H1 (cell line): ENCODE measurements at regions of chr17 and their contacts with region 1.

Region 1: GRCh38 chr17:61412143-61412859 is 12.7 kb downstream of the TBX2 start:
- DNase-seq: peak in 1 of 2 experiments; percentile 89
- H3K4me3 ChIP-seq: peak overlapping the region; percentile 50 to 65 (median 58)
- H3K27ac ChIP-seq: no peak overlapping the region
- H3K4me1 ChIP-seq: peaks cover 0 to 23% (median 11%) of the 10 kb centered on the region in 4 experiments; a peak in 5 of 7 replicates
- H3K27me3 ChIP-seq: peaks cover 43 to 95% (median 87%) of the 10 kb centered on the region in 4 experiments
- CTCF ChIP-seq: peak; percentile 84 to 95 (median 87)
- EP300 ChIP-seq: no peak
- POLR2A ChIP-seq: 0 out of 3 replicates have a peak, but pooled peaks of 1 of the 2 experiments have one; percentile 23
- RAD21 ChIP-seq: peak; percentile 95 to 98

Region 2: GRCh38 chr17:61335845-61336655 is 76.3 kb before region 1 on chr17:
- CTCF ChIA-PET with region 1: no interaction called
- POLR2A ChIA-PET with region 1: no interaction called
- DNase-seq: no peak
- H3K4me3 ChIP-seq: no peak overlapping the region
- H3K27ac ChIP-seq: no peak overlapping the region
- H3K4me1 ChIP-seq: 0 out of 7 replicates have a peak, but pooled peaks cover 0 to 2% (median 0%) of the 10 kb centered on the region in 4 experiments
- H3K27me3 ChIP-seq: no peaks in the 10 kb centered on the region
- CTCF ChIP-seq: no peak
- EP300 ChIP-seq: no peak
- POLR2A ChIP-seq: no peak
- RAD21 ChIP-seq: no peak

Region 3: GRCh38 chr17:61379457-61380216 is 32.7 kb before region 1 on chr17:
- CTCF ChIA-PET with region 1: no interaction called
- POLR2A ChIA-PET with region 1: no interaction called
- DNase-seq: no peak
- H3K4me3 ChIP-seq: no peak overlapping the region
- H3K27ac ChIP-seq: no peak overlapping the region
- H3K4me1 ChIP-seq: peaks cover 0 to 2% (median 0%) of the 10 kb centered on the region in 4 experiments; a peak in 2 of 7 replicates
- H3K27me3 ChIP-seq: no peaks in the 10 kb centered on the region
- CTCF ChIP-seq: no peak
- EP300 ChIP-seq: no peak
- POLR2A ChIP-seq: no peak
- RAD21 ChIP-seq: no peak

Region 4: DNA sequence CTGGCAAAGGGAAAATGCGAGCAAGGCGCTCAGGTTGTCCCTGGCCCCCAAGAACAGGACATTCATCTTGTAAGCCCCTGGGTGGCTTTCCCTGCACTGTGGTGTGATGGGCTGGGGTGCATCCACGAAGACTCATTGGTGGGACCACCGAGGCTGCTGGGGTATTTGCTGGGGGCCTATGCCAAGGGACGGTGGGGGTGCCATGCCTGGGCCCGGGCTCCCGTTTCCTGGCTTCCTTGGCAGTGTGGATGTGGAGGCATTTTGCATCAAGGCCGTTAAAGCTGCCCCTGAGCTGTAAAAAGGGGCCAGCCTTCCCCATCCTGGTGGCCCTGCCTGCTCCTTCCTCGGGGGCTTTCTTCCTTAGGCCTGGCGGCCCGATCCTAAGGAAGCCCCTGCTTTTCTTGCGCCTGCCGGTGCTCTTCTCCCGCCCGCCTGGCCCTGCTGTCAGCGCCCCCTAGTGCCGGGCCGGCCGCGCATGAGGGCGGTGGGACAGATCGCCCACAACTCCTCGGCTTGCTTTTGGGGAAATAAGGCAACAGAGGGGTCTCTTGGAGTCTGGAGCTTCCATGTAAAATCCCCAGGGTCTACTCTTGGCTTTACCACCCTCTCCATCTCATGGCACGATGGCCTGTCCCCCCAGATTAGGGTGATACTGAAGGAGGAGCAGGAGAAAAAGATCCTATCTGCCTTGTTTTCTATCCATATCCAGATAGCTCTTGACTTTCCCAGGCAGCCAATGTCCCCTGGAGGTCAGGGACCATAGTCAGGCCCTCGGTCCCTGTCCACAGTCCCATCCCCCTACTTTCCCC is 22.4 kb before region 1 on chr17:
- CTCF ChIA-PET with region 1: interaction called, 31 read pairs
- POLR2A ChIA-PET with region 1: no interaction called
- DNase-seq: peak in 1 of 2 experiments; percentile 92
- H3K4me3 ChIP-seq: no peak overlapping the region
- H3K27ac ChIP-seq: no peak overlapping the region
- H3K4me1 ChIP-seq: peaks cover 0 to 3% (median 1%) of the 10 kb centered on the region in 4 experiments; a peak in 3 of 7 replicates
- H3K27me3 ChIP-seq: peaks cover 10 to 24% (median 21%) of the 10 kb centered on the region in 4 experiments
- CTCF ChIP-seq: peak; percentile 90 to 93 (median 92)
- EP300 ChIP-seq: no peak
- POLR2A ChIP-seq: no peak
- RAD21 ChIP-seq: peak; percentile 87 to 92

Region 5: DNA sequence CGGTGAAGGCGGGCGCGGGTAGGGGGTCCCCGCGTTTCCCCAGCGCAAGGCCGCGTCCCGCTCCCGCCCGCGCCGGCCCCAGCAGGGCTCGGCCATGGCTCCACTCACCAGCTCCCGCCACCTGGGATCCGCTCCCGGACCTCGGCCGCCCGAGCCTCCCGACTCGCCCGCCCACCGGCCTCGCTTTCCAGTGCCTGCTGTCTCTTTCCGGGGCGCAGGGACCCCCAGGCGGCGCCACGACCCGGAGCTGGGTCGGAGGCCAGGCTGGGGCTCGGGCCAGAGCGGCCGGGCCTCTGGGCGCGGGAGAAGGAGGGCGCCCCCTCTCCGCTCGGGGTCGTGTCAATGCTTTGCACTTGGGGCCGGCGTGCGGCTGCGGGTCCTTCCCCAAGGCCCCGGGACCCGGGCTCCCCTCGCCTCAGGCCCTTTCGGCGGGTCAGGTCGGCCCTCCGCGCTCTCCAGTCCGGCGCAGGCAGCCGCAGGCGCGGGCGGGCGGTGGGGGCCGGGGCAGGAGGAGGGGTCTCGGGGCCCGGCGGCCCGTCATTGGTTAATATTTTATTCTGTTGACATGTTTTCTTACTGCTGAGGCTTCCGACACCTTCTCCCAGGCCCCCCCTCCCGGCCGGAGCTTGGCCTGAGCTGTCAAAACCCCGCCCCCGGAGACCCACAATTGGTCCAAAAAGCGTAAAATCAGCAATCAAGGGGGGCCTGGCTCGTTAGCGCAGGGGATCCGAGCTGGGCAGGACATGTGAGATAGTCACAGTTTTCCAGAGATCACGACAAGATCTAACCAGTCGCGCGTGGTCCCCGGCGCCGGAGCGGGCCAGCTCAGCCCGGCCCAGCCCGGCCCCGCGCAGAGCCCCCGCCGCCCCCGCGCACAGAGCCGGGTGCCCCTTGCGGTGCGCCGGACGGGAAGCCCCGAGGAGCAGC is 12.9 kb before region 1 on chr17 and contains the start of gene TBX2:
- CTCF ChIA-PET with region 1: interaction called, 31 read pairs
- POLR2A ChIA-PET with region 1: interaction called, 8 read pairs
- DNase-seq: peak in 1 of 2 experiments; percentile 80
- H3K4me3 ChIP-seq: peak within 1 kb of the TSS in 2 of 4 experiments; percentile 6 to 53; a peak in 5 of 8 replicates
- H3K27ac ChIP-seq: no peak within 1 kb of the TSS
- H3K4me1 ChIP-seq: peaks cover 0 to 40% (median 24%) of the 10 kb centered on the region in 4 experiments; a peak in 6 of 7 replicates
- H3K27me3 ChIP-seq: peaks cover 99 to 100% (median 100%) of the 10 kb centered on the region in 4 experiments
- CTCF ChIP-seq: peak in 1 of 3 experiments; percentile 7; a peak in 1 of 4 replicates
- EP300 ChIP-seq: no peak
- POLR2A ChIP-seq: no peak
- RAD21 ChIP-seq: 0 out of 4 replicates have a peak, but pooled peaks of 1 of the 2 experiments have one; percentile 0
- total RNA-seq, gene TBX2: not detected in 2 replicates

Region 6: GRCh38 chr17:61426013-61426730 is 13.9 kb after region 1 on chr17:
- CTCF ChIA-PET with region 1: interaction called, 11 read pairs
- POLR2A ChIA-PET with region 1: no interaction called
- DNase-seq: peak in 1 of 2 experiments; percentile 67
- H3K4me3 ChIP-seq: no peak overlapping the region
- H3K27ac ChIP-seq: no peak overlapping the region
- H3K4me1 ChIP-seq: peaks cover 0 to 4% (median 2%) of the 10 kb centered on the region in 4 experiments; a peak in 3 of 7 replicates
- H3K27me3 ChIP-seq: no peaks in the 10 kb centered on the region; a peak in 1 of 7 replicates
- CTCF ChIP-seq: peak; percentile 49 to 73 (median 69)
- EP300 ChIP-seq: no peak
- POLR2A ChIP-seq: no peak
- RAD21 ChIP-seq: peak; percentile 68 to 81

Region 7: GRCh38 chr17:61451538-61452300 is 39.4 kb after region 1 on chr17:
- CTCF ChIA-PET with region 1: interaction called, 52 read pairs
- POLR2A ChIA-PET with region 1: interaction called, 4 read pairs
- DNase-seq: peak in 1 of 2 experiments; percentile 83
- H3K4me3 ChIP-seq: peak overlapping the region; percentile 16 to 59 (median 18); a peak in 6 of 8 replicates
- H3K27ac ChIP-seq: no peak overlapping the region
- H3K4me1 ChIP-seq: peaks cover 0 to 26% (median 10%) of the 10 kb centered on the region in 4 experiments; a peak in 5 of 7 replicates
- H3K27me3 ChIP-seq: peaks cover 63 to 90% (median 71%) of the 10 kb centered on the region in 4 experiments
- CTCF ChIP-seq: no peak
- EP300 ChIP-seq: no peak
- POLR2A ChIP-seq: no peak
- RAD21 ChIP-seq: no peak

Region 8: DNA sequence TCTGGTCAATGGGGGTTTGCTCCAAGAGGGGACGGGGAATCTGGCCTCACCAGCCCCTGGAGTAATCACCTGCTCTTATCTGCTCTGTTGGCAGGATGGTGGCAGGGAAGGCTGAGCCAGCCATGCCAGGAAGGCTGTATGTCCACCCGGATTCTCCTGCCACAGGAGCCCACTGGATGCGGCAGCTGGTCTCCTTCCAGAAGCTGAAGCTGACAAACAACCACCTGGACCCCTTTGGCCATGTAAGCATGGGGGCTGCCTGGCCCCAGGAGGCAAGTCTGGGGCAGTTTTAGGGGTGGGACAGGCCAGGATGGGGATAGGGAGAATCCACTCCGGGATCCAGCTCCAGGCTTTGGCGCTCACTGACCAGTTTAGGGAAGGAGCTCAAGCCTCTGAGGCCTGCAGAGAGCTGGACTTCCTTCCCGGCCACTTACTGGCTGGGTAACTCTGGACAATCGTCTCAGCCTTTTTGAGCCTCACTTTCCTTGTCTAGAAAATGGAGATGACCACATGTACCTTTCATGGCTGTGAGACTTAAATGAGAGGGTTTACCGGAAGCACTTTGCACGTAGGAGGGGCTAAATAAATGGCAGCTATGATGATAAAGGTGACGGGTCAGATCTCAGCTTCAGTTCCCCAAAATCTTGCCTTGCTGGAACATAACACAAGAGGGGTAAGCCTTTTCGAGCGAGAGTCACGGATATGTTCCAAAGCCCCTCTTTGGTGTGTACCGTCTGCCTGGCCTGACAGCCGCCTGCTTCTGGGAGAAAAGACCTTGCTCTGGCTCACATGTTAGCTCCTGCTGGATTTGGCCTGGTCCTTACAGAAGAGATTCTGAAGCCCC is 55.3 kb after region 1 on chr17:
- CTCF ChIA-PET with region 1: interaction called, 108 read pairs
- POLR2A ChIA-PET with region 1: interaction called, 6 read pairs
- DNase-seq: peak in 1 of 2 experiments; percentile 94
- H3K4me3 ChIP-seq: peak overlapping the region in 1 of 4 experiments; percentile 33; a peak in 2 of 8 replicates
- H3K27ac ChIP-seq: no peak overlapping the region
- H3K4me1 ChIP-seq: peaks cover 4 to 25% (median 11%) of the 10 kb centered on the region in 4 experiments
- H3K27me3 ChIP-seq: peaks cover 17 to 59% (median 50%) of the 10 kb centered on the region in 4 experiments
- CTCF ChIP-seq: no peak
- EP300 ChIP-seq: no peak
- POLR2A ChIP-seq: no peak
- RAD21 ChIP-seq: no peak

Region 9: GRCh38 chr17:61574542-61575174 is 162.4 kb after region 1 on chr17:
- CTCF ChIA-PET with region 1: interaction called, 13 read pairs
- POLR2A ChIA-PET with region 1: no interaction called
- DNase-seq: no peak
- H3K4me3 ChIP-seq: no peak overlapping the region
- H3K27ac ChIP-seq: no peak overlapping the region
- H3K4me1 ChIP-seq: no peaks in the 10 kb centered on the region
- H3K27me3 ChIP-seq: no peaks in the 10 kb centered on the region
- CTCF ChIP-seq: peak in 2 of 3 experiments; percentile 35 to 52; a peak in 3 of 4 replicates
- EP300 ChIP-seq: no peak
- POLR2A ChIP-seq: no peak
- RAD21 ChIP-seq: peak; percentile 73 to 77